Mammary epithelial cell (primary cell): ENCODE measurements at regions of chr1 and their contacts with region 1.

Region 1: DNA sequence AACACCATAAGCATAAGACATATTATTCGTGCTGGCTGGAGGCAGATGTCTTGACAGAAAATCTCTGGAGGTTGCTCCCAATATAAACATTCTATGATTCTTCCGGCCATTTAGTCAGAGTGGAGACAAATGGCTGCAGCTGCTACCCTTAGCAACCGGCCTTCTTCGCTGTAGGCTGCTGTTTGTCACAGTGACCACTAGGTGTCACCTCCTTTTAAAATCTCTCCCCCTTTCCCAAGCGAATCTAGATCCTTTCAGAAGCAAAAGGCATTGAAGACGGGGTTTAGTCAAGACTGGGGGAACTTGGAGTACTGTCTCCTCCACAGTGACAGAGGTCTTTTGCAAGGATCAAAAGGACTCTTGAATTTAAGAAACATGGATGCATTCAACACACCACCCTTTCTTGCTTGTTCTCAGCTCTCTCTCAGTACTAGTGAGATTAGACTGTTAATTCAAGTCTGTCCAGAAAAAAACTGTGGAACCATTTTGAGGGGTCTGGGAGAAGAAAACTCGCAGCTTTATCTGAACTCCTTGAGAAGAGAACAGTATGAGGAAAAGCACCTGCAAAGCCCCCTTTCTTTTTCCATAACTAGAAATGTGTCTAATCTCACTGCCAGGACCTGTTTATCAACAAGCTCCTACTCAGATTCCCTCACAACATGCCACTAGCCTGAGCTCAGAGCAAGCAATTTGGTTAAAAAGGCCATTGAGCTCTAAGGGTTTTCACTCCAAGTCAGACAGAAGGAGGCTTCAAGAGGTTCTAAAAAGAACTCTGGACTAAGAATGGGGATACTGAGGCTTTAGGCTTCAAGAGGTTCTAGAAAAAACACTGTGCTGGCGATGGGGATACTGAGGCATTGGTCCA is 408.3 kb upstream of the PLXNA2 start:
- DNase-seq: peak; percentile 54
- H3K4me3 ChIP-seq: no peak overlapping the region
- H3K27ac ChIP-seq: no peak overlapping the region
- H3K4me1 ChIP-seq: no peaks in the 10 kb centered on the region
- H3K27me3 ChIP-seq: peaks cover 6% of the 10 kb centered on the region
- CTCF ChIP-seq: peak; percentile 83 to 87

Region 2: DNA sequence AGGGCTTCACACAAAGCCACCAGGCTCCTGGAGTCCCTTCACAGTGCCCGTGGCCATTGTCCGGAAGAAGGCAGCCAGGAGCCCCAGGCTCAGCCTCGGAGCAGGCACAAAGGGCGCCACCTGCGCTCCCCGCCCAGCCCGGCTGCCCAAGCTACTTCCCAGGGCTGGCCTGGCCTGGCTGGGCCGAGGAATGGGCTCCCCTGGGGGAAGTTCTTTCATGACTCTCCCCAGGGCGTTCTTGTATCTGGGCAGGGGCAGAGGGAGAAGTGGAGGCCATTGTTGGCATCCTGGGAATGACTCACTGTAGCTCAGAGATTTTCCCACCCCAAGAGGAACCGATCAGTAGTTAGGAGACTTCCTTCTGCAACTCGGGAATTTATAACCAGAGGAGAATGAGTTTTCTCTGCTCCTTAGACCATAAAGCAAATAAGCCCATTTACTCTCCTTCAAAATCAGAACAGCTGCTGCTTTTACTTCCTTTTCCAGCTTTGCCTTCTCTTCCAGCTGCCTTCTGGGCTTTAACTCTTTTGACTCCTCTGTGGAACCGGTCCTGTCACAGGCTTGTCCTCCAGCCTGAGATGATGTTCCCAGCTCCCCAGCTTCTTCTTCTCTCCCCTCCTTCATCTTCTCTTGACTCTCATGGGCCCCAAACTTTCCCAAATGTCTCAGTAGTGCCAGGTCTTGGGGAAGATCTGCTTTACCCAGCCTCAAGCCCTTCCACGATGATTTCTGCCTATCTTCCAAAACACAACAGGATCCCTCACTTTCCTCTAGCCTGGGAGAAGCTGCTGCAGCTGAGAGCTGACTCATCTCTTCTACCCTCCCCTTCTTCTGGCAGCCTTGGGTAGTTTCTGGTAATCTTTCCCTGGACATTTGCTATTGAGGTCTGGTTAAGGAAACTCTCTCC is 622.9 kb before region 1 on chr1:
- CTCF ChIA-PET with region 1: no interaction called
- dilution Hi-C with region 1: no loop called
- in situ Hi-C with region 1: no loop called
- intact Hi-C with region 1: loop called (anchors 10 kb)
- DNase-seq: no peak
- H3K4me3 ChIP-seq: no peak overlapping the region
- H3K27ac ChIP-seq: no peak overlapping the region
- H3K4me1 ChIP-seq: no peaks in the 10 kb centered on the region
- H3K27me3 ChIP-seq: no peaks in the 10 kb centered on the region
- CTCF ChIP-seq: no peak

Region 3: DNA sequence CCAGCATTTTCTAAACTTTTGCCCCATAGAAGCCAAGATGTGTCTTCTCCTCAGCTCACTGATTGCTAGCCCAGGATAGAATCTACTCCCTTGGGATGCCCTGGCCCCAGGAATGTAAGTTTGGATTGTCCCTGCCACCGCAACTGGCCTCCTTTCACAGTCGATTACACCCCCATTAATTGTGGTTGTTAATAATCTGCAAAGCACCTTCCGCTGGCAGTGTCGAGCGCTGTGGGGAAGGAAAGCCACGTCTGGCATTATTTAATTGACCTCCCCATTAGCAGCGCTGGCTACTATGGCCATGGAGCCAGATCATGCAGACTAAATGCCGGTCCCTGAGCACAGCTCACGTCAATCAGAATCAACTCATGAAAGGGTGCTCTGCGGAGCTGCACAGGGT is 188.9 kb after region 1 on chr1:
- CTCF ChIA-PET with region 1: no interaction called
- dilution Hi-C with region 1: no loop called
- in situ Hi-C with region 1: no loop called
- intact Hi-C with region 1: no loop called
- DNase-seq: no peak
- H3K4me3 ChIP-seq: no peak overlapping the region
- H3K27ac ChIP-seq: no peak overlapping the region
- H3K4me1 ChIP-seq: peaks cover 6% of the 10 kb centered on the region
- H3K27me3 ChIP-seq: no peaks in the 10 kb centered on the region
- CTCF ChIP-seq: no peak

Region 4: GRCh38 chr1:208988811-208989222 is 336.3 kb after region 1 on chr1:
- CTCF ChIA-PET with region 1: interaction called, 7 read pairs
- dilution Hi-C with region 1: no loop called
- in situ Hi-C with region 1: loop called in 1 of 2 experiments (anchors 25 kb)
- intact Hi-C with region 1: no loop called
- DNase-seq: peak; percentile 58
- H3K4me3 ChIP-seq: peak overlapping the region; percentile 28 to 65 (median 46)
- H3K27ac ChIP-seq: peak overlapping the region; percentile 29
- H3K4me1 ChIP-seq: peaks cover 34% of the 10 kb centered on the region
- H3K27me3 ChIP-seq: no peaks in the 10 kb centered on the region
- CTCF ChIP-seq: no peak

Region 5: DNA sequence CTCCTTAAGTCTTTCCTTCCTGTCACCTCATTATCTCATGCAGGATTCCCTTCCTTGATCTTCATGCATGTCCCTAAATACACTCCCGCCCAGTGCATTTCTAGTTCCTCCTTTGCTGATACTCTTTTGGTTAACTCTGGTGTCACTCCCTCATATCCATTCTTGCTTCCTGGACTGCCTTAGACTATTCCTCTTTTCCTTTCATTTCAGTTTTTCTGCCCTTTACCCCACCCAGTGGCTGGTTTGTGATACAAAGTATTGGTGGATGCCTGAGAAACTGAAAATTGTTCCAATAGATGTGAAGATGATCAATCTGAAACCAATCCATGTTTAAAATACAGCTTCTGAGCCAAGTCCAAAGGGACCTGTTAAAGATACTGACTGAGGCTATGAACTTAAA is 377.2 kb after region 1 on chr1:
- CTCF ChIA-PET with region 1: no interaction called
- dilution Hi-C with region 1: no loop called
- in situ Hi-C with region 1: no loop called
- intact Hi-C with region 1: loop called (anchors 1 kb)
- DNase-seq: peak; percentile 10
- H3K4me3 ChIP-seq: no peak overlapping the region
- H3K27ac ChIP-seq: no peak overlapping the region
- H3K4me1 ChIP-seq: no peaks in the 10 kb centered on the region
- H3K27me3 ChIP-seq: no peaks in the 10 kb centered on the region
- CTCF ChIP-seq: peak; percentile 15 to 35

Region 6: GRCh38 chr1:209207701-209208286 is 555.3 kb after region 1 on chr1:
- CTCF ChIA-PET with region 1: interaction called, 8 read pairs
- dilution Hi-C with region 1: no loop called
- in situ Hi-C with region 1: no loop called
- intact Hi-C with region 1: loop called (anchors 1 kb)
- DNase-seq: peak; percentile 44
- H3K4me3 ChIP-seq: peak overlapping the region; percentile 28 to 46 (median 36)
- H3K27ac ChIP-seq: no peak overlapping the region
- H3K4me1 ChIP-seq: peaks cover 12% of the 10 kb centered on the region
- H3K27me3 ChIP-seq: no peaks in the 10 kb centered on the region
- CTCF ChIP-seq: peak; percentile 59 to 92